Pancreas (tissue), 10 donors: ENCODE measurements at regions of chr20 and their contacts with region 1.

Region 1: DNA sequence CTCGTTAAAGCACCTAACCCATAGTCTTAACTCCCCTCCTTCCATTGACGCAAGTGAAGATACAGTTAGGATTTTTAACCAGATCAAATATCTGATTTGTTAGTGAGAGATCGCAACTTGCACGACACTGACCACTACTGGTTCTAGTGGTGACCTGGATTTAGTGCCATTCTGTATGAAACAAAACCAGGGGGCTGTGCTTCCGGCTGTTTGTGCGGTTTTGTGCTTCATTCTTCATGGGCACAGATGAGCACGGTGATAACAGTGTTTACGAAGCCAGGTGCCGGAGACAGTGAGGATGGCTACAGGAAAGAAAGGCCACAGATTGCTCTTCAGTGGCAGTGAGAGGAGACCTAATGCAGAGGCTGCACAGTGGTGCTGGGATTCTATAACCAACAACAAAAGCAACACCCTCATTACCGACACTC is 75.5 kb downstream of the NOL4L start:
- DNase-seq: peak in 2 of 6 donors; percentile 6 to 34
- ATAC-seq: peak in 2 of 4 donors; percentile 14 to 28
- H3K4me3 ChIP-seq: no peak overlapping the region
- H3K27ac ChIP-seq: no peak overlapping the region
- H3K4me1 ChIP-seq: peaks cover 0 to 15% (median 10%) of the 10 kb centered on the region in 3 donors
- H3K27me3 ChIP-seq: no peaks in the 10 kb centered on the region
- CTCF ChIP-seq: no peak

Region 2: DNA sequence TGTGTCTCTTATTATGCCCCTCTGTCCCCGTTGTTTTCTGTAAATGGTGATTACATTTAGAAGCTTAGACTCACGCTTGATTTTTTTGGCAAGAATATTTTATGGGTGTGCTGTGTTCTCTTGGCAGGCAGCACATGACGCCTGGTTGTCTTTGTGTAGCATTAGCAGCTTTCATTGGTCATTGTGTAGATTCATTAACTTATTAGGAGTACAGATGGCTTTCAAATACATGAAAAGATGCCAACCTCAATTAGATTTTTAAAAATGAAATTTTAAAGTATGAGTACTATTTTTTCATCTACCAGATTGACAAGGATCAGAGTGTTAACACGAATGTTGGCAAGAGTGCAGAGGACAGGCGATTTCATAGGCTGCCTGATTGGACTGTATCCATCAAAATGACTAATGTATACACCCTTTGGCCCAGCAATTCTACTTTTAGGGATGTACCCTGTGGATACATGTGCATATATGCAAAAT is 856.7 kb before region 1 on chr20:
- intact Hi-C with region 1: loop called in 1 of 3 experiments (anchors 10 kb)
- DNase-seq: no peak
- ATAC-seq: no peak
- H3K4me3 ChIP-seq: no peak overlapping the region
- H3K27ac ChIP-seq: no peak overlapping the region
- H3K4me1 ChIP-seq: no peaks in the 10 kb centered on the region
- H3K27me3 ChIP-seq: no peaks in the 10 kb centered on the region
- CTCF ChIP-seq: no peak

Region 3: DNA sequence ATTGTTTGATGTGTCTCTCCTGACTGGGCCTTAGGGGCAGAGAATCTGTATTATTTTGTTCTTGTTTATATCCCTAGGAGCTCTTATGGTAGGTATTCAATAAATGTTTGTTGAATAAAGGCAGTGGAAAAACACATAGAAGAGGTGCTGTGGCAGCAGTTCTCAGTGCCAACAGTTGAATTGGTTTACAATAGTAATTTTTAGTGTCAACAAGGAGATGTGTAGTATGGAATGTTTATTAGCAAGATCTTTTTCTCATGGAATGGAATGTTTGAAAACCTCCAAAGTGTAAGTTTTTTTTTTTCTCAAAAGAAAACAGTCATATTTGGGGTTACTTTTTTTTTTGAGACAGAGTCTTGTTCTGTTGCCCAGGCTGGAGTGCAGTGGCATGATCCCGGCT is 123.6 kb before region 1 on chr20:
- intact Hi-C with region 1: no loop called
- DNase-seq: no peak
- ATAC-seq: peak in 1 of 4 donors; percentile 21
- H3K4me3 ChIP-seq: no peak overlapping the region
- H3K27ac ChIP-seq: no peak overlapping the region
- H3K4me1 ChIP-seq: peaks cover 0 to 13% (median 5%) of the 10 kb centered on the region in 3 donors
- H3K27me3 ChIP-seq: no peaks in the 10 kb centered on the region
- CTCF ChIP-seq: no peak

Region 4: GRCh38 chr20:32396646-32397160 is 113.0 kb before region 1 on chr20:
- intact Hi-C with region 1: no loop called
- DNase-seq: no peak
- ATAC-seq: peak in 1 of 4 donors; percentile 20
- H3K4me3 ChIP-seq: no peak overlapping the region
- H3K27ac ChIP-seq: no peak overlapping the region
- H3K4me1 ChIP-seq: no peaks in the 10 kb centered on the region
- H3K27me3 ChIP-seq: no peaks in the 10 kb centered on the region
- CTCF ChIP-seq: no peak

Region 5: GRCh38 chr20:32626859-32627636 is 117.4 kb after region 1 on chr20:
- intact Hi-C with region 1: no loop called
- DNase-seq: peak in 5 of 6 donors; percentile 20 to 72 (median 27)
- ATAC-seq: peak; percentile 68 to 86 (median 76)
- H3K4me3 ChIP-seq: no peak overlapping the region
- H3K27ac ChIP-seq: no peak overlapping the region
- H3K4me1 ChIP-seq: peaks cover 0 to 10% (median 0%) of the 10 kb centered on the region in 3 donors
- H3K27me3 ChIP-seq: no peaks in the 10 kb centered on the region
- CTCF ChIP-seq: no peak